Calu3 (cell line): ENCODE measurements at regions of chr6 and their contacts with region 1.

Region 1: DNA sequence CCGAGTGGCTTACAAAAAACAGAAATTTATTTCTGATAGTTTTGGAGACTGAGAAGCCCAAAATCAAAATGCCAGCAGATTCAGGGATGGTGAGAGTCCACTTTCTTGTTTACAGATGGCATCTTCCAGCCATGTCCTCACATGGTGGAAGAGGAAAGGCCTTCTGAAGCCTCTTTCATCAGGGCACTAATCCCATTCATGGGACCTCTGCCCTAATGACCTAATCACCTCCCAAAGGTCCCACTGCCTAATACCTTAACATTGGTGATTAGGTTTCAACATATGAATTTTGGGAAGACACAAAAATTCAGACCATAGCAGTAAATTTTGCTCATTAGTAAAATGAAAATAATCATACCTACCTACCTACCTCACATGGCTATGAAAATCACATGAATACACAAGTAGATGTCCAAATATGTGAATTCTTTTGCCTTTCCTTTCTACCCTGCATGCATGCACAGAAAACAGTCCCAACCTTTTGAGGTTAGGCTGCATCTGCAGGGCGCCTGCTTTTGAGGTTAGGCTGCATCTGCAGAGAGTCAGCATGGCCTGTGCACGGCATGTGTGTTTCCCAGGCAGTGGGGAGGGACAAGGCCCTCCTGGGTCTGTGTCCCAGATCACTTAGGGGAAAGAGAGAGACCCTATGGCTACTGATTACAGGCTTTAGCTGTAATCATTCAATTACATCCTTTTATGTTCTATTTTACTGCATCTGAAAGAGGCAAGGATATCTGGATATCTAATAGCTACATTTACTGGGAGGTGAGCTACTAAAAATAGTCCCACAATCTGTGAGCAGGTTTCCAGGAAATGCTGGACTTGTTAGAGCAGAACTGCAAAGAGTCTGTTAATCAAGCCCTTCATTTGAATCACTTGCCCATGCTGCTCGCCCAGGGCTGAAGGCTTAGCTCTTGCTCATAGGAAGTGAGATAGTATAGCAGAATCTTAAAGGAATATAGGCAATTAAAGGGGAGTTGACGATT is 497.7 kb upstream of the MARCKS start:
- DNase-seq: peak; percentile 40
- H3K4me3 Mint-ChIP-seq: no peak overlapping the region
- H3K27ac Mint-ChIP-seq: peak overlapping the region; percentile 69
- H3K4me1 Mint-ChIP-seq: peaks cover 65% of the 10 kb centered on the region
- H3K27me3 Mint-ChIP-seq: no peaks in the 10 kb centered on the region
- CTCF ChIP-seq: no peak

Region 2: GRCh38 chr6:113018351-113019151 is 340.9 kb before region 1 on chr6:
- CTCF ChIA-PET with region 1: no interaction called
- intact Hi-C with region 1: no loop called
- DNase-seq: no peak
- H3K4me3 Mint-ChIP-seq: no peak overlapping the region
- H3K27ac Mint-ChIP-seq: no peak overlapping the region
- H3K4me1 Mint-ChIP-seq: no peaks in the 10 kb centered on the region
- H3K27me3 Mint-ChIP-seq: no peaks in the 10 kb centered on the region
- CTCF ChIP-seq: no peak

Region 3: GRCh38 chr6:113031591-113032238 is 327.7 kb before region 1 on chr6:
- CTCF ChIA-PET with region 1: interaction called, 11 read pairs
- intact Hi-C with region 1: no loop called
- DNase-seq: no peak
- H3K4me3 Mint-ChIP-seq: no peak overlapping the region
- H3K27ac Mint-ChIP-seq: no peak overlapping the region
- H3K4me1 Mint-ChIP-seq: no peaks in the 10 kb centered on the region
- H3K27me3 Mint-ChIP-seq: no peaks in the 10 kb centered on the region
- CTCF ChIP-seq: no peak